H1 (cell line): ENCODE measurements at regions of chr12 and their contacts with region 1.

Region 1: GRCh38 chr12:19757317-19757877 is 318.1 kb downstream of the AEBP2 start:
- DNase-seq: no peak
- H3K4me3 ChIP-seq: no peak overlapping the region
- H3K27ac ChIP-seq: no peak overlapping the region
- H3K4me1 ChIP-seq: no peaks in the 10 kb centered on the region
- H3K27me3 ChIP-seq: no peaks in the 10 kb centered on the region
- CTCF ChIP-seq: peak in 2 of 3 experiments; percentile 37 to 74; a peak in 2 of 4 replicates
- EP300 ChIP-seq: no peak
- POLR2A ChIP-seq: no peak
- RAD21 ChIP-seq: peak; percentile 82 to 83

Region 2: GRCh38 chr12:19739183-19739776 is 18.1 kb before region 1 on chr12:
- CTCF ChIA-PET with region 1: interaction called, 23 read pairs
- POLR2A ChIA-PET with region 1: no interaction called
- DNase-seq: no peak
- H3K4me3 ChIP-seq: no peak overlapping the region
- H3K27ac ChIP-seq: no peak overlapping the region
- H3K4me1 ChIP-seq: no peaks in the 10 kb centered on the region
- H3K27me3 ChIP-seq: no peaks in the 10 kb centered on the region
- CTCF ChIP-seq: peak in 2 of 3 experiments; percentile 53; a peak in 2 of 4 replicates
- EP300 ChIP-seq: no peak
- POLR2A ChIP-seq: no peak
- RAD21 ChIP-seq: peak; percentile 78 to 81

Region 3: DNA sequence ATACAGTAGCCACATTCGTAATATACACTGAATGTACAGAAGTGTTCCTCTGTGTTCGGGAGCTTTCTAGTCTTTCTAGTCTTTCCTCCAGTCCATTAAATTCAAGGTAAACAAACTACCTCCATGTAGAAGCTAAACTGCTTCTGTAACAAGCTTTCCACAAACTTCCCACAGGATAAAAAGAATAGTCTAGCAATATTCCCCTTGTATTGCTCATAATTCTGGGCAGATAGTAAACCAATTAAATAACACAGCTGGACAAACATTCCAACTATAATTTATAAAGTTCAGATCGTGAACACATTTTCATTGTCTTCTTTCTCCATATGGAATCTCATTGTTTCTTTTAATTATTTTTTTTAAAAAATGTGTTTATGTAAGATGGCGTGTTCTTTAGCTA is 10.9 kb before region 1 on chr12:
- CTCF ChIA-PET with region 1: interaction called, 23 read pairs
- POLR2A ChIA-PET with region 1: no interaction called
- DNase-seq: no peak
- H3K4me3 ChIP-seq: no peak overlapping the region
- H3K27ac ChIP-seq: no peak overlapping the region
- H3K4me1 ChIP-seq: no peaks in the 10 kb centered on the region
- H3K27me3 ChIP-seq: no peaks in the 10 kb centered on the region
- CTCF ChIP-seq: no peak
- EP300 ChIP-seq: no peak
- POLR2A ChIP-seq: no peak
- RAD21 ChIP-seq: no peak

Region 4: DNA sequence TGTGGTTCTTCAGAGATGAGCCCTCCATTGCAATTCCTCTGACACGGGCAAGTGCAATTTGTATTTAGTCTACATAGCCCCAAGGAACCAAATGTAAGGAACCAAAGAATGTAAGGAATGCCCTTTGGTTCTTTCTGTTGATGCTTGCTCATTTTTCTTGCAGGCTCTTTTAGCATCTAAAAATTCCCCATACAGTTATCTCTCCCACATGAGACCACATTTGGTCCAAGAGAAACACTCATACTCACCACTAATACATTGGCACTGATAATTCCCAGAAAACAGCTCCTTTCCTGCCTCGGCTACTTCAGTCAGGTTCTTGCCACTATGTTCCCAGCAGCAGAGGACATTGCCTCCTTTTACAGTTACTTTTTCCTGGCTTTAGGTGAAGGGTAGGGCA is 14.5 kb after region 1 on chr12:
- CTCF ChIA-PET with region 1: interaction called, 14 read pairs
- POLR2A ChIA-PET with region 1: no interaction called
- DNase-seq: no peak
- H3K4me3 ChIP-seq: no peak overlapping the region
- H3K27ac ChIP-seq: no peak overlapping the region
- H3K4me1 ChIP-seq: no peaks in the 10 kb centered on the region; a peak in 1 of 7 replicates
- H3K27me3 ChIP-seq: no peaks in the 10 kb centered on the region
- CTCF ChIP-seq: no peak
- EP300 ChIP-seq: no peak
- POLR2A ChIP-seq: no peak
- RAD21 ChIP-seq: no peak

Region 5: DNA sequence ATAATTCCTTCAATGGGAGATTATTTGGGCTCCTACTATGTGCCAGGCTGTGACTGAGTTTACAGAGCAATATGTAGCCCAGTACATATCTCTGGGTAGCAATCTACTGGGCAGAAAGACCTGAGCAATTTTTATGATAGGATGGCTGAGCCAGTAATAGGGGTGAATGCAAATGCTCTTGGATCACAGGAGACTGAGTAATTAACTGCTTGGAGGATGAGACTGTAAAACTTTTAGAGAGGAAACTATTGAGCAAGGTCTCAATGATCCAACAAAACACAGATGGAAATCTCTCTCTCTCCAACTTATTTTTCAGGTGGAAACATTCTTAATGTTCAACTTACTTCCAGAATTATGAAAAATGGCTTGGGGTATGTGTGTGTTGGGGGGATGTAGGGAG is 84.1 kb after region 1 on chr12:
- CTCF ChIA-PET with region 1: no interaction called
- POLR2A ChIA-PET with region 1: no interaction called
- DNase-seq: no peak
- H3K4me3 ChIP-seq: no peak overlapping the region
- H3K27ac ChIP-seq: no peak overlapping the region
- H3K4me1 ChIP-seq: no peaks in the 10 kb centered on the region
- H3K27me3 ChIP-seq: no peaks in the 10 kb centered on the region
- CTCF ChIP-seq: no peak
- EP300 ChIP-seq: no peak
- POLR2A ChIP-seq: no peak
- RAD21 ChIP-seq: no peak

Region 6: GRCh38 chr12:19893514-19893913 is 136.1 kb after region 1 on chr12:
- CTCF ChIA-PET with region 1: interaction called, 10 read pairs
- POLR2A ChIA-PET with region 1: no interaction called
- DNase-seq: no peak
- H3K4me3 ChIP-seq: no peak overlapping the region
- H3K27ac ChIP-seq: no peak overlapping the region
- H3K4me1 ChIP-seq: no peaks in the 10 kb centered on the region
- H3K27me3 ChIP-seq: no peaks in the 10 kb centered on the region
- CTCF ChIP-seq: peak in 2 of 3 experiments; percentile 5 to 26; a peak in 2 of 4 replicates
- EP300 ChIP-seq: no peak
- POLR2A ChIP-seq: no peak
- RAD21 ChIP-seq: peak; percentile 30 to 56; a peak in 3 of 4 replicates